ENCODE measurements at regions of chr10 and their contacts with region 1.

Region 1: DNA sequence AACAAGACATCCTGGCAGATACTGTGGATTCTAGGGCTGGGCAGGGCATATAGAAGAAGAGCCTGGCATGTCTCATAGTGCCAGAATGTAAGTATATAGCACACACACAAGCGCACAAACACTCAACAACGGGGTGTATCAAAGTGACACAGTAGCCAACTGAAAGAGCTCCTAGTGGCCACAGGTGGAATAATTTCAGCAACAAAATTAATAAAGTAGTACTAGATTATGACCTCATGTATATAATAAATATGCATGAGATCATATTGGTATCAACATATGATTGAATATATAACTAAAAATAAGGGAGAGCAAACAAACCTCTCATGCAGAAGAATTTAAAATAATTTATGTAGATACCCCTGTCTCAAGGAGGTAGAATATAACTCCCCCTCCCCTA is 72.4 kb upstream of the CXCL12 start:
- DNase-seq: no peak
- ATAC-seq: no peak
- H3K4me3 ChIP-seq: no peak overlapping the region
- H3K27ac ChIP-seq: no peak overlapping the region
- H3K4me1 ChIP-seq: peaks cover 0 to 17% (median 5%) of the 10 kb centered on the region in 9 donors
- H3K27me3 ChIP-seq: peaks cover 0 to 8% (median 0%) of the 10 kb centered on the region in 7 donors
- CTCF ChIP-seq: peak in 2 of 9 donors; percentile 11 to 20

Region 2: DNA sequence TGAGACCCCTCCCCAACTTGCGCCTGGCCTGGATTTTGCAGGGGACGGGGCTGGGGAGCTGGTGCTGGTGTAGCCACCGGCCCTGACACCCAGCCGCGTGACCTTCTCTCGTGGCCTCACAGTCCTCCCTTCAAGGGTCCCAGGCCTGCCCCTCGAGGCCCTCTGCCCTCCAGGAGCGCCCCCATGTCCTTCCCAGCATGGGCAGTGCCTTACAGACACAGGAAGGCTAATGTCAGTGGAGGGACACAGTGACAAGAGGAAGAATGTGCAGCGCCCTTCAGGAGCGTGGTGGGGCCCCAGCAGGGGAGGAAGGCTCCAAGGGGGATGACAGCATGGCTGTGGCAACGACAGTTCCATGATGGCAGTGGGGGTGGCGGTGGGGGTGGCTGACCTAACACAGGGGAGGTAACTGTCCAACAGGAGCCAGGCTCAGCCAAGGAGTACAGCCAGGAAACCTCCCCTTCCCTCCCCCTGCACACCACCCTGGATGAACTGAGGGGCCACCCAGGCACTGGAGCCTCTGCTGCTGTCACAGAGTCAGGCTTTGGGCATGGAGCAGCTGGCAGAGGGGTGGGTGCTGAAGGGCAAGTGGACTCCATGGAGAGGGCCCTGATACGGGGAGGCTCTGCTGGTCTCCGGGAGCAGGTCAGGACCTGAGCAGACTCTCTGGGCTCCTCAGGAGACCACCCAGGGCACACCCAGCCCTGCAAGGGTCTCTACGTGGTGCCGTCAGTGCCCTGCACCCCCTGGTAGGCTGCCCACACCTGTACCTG is 1456.4 kb before region 1 on chr10:
- intact Hi-C with region 1: loop called in 1 of 10 experiments (anchors 5 kb)
- DNase-seq: no peak
- ATAC-seq: peak in 1 of 8 donors; percentile 14
- H3K4me3 ChIP-seq: no peak overlapping the region
- H3K27ac ChIP-seq: no peak overlapping the region
- H3K4me1 ChIP-seq: no peaks in the 10 kb centered on the region
- H3K27me3 ChIP-seq: peaks cover 0 to 7% (median 0%) of the 10 kb centered on the region in 7 donors
- CTCF ChIP-seq: no peak

Region 3: GRCh38 chr10:44706745-44707144 is 249.5 kb after region 1 on chr10:
- intact Hi-C with region 1: no loop called
- DNase-seq: no peak
- ATAC-seq: no peak
- H3K4me3 ChIP-seq: no peak overlapping the region
- H3K27ac ChIP-seq: no peak overlapping the region
- H3K4me1 ChIP-seq: no peaks in the 10 kb centered on the region
- H3K27me3 ChIP-seq: no peaks in the 10 kb centered on the region
- CTCF ChIP-seq: no peak